Panc1 (cell line): ENCODE measurements at regions of chr12 and their contacts with region 1.

Region 1: GRCh38 chr12:51424662-51425438 is at the start of gene SLC4A8:
- DNase-seq: no peak
- ATAC-seq: peak; percentile 98
- H3K4me3 ChIP-seq: peak within 1 kb of the TSS; percentile 60 to 70
- H3K27ac ChIP-seq: peak within 1 kb of the TSS; percentile 80
- H3K4me1 ChIP-seq: peaks cover 6% of the 10 kb centered on the region; the same call in 1 of the 2 replicates
- H3K27me3 ChIP-seq: no peaks in the 10 kb centered on the region
- CTCF ChIP-seq: peak; percentile 92
- total RNA-seq, gene SLC4A8: 18.8 TPM

Region 2: DNA sequence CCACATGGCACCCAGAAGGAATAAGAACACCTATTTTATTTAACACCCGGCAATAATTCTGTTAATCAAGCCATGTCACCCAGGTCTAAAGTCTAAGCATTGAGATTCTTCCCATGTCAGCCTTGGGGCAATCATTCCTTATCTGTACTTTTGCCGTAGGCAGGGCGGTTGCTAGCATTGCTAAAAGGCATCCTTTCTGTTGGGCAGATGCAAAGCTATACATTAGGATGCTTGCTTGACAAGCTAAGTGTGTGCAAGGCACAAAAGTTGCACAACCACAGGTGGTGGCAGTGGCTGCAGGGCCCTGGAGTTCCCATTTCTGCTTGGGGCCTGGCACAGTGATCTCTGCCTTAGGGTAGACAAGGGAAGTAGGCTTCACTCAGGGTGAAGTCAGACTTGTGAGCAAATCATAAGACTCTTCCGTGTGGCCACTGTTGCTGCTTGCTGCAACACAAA is 21.1 kb before region 1 on chr12:
- CTCF ChIA-PET with region 1: no interaction called
- POLR2A ChIA-PET with region 1: no interaction called
- in situ Hi-C with region 1: no loop called
- intact Hi-C with region 1: no loop called
- DNase-seq: no peak
- ATAC-seq: no peak
- H3K4me3 ChIP-seq: no peak overlapping the region
- H3K27ac ChIP-seq: no peak overlapping the region
- H3K4me1 ChIP-seq: no peaks in the 10 kb centered on the region
- H3K27me3 ChIP-seq: no peaks in the 10 kb centered on the region
- CTCF ChIP-seq: no peak

Region 3: DNA sequence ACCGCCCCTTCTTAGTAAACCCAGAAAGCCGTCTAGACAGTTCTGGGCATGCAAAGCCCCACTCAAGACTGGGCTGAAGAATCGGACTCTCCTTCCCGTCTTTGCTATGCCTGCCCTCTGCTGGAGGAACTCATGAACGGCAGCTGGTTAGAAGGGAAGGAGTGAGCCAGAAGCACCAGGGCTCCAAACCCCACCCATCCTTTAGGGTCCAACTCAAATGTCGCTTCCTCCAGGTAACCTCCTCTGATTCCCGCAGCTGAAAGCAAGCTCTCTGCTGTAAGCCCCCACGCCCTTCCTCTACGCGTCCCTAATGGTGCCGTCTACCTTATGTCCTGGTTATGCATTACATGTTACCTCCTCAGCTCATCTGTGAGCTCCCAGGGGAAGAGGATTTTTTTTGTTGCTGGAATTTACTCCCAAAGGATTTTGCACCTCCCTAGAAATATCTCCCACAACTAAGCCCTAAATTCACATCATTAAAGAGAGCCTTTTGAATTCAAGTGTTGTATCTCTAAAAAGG is 107.2 kb after region 1 on chr12:
- CTCF ChIA-PET with region 1: interaction called, 12 read pairs
- POLR2A ChIA-PET with region 1: no interaction called
- in situ Hi-C with region 1: no loop called
- intact Hi-C with region 1: loop called (anchors 1 kb)
- DNase-seq: peak; percentile 73
- ATAC-seq: peak; percentile 95
- H3K4me3 ChIP-seq: no peak overlapping the region
- H3K27ac ChIP-seq: no peak overlapping the region
- H3K4me1 ChIP-seq: peaks cover 6% of the 10 kb centered on the region
- H3K27me3 ChIP-seq: peaks cover 2% of the 10 kb centered on the region; the same call in 1 of the 2 replicates
- CTCF ChIP-seq: peak; percentile 95

Region 4: DNA sequence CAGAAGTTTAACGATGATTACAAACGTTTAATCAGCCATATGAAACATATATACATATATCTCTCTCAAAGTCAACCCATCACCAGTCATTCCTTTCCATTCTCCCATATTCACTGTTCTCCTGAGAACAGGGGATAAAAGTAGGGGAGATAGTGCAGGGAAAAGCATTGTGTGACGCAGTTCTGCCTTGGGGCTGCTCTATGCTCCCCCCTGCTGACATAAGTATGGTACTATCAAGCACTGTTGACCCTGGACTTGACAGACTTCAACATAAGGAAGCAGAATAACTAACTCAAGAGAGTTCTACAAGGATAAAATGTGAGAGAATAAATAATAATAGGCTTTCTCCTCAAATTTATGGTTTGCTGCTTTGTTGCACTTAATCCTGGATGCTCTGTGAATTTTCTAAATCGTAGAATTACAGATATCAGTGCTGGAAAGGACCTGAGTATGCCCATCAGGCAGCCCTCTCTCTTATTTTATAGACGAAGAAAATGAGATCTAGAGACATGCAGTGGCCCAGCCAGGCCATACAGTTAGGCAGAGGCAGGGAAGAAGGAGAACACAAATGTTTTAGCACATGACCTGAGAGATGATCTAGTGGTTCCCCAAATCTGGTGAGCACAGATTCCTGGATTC is 253.4 kb after region 1 on chr12:
- CTCF ChIA-PET with region 1: no interaction called
- POLR2A ChIA-PET with region 1: no interaction called
- in situ Hi-C with region 1: no loop called
- intact Hi-C with region 1: loop called (anchors 10 kb)
- DNase-seq: peak; percentile 43
- ATAC-seq: peak; percentile 98
- H3K4me3 ChIP-seq: no peak overlapping the region
- H3K27ac ChIP-seq: no peak overlapping the region
- H3K4me1 ChIP-seq: no peaks in the 10 kb centered on the region
- H3K27me3 ChIP-seq: no peaks in the 10 kb centered on the region
- CTCF ChIP-seq: peak; percentile 92